Endothelial cell of umbilical vein (primary cell): ENCODE measurements at regions of chr6 and their contacts with region 1.

Region 1: DNA sequence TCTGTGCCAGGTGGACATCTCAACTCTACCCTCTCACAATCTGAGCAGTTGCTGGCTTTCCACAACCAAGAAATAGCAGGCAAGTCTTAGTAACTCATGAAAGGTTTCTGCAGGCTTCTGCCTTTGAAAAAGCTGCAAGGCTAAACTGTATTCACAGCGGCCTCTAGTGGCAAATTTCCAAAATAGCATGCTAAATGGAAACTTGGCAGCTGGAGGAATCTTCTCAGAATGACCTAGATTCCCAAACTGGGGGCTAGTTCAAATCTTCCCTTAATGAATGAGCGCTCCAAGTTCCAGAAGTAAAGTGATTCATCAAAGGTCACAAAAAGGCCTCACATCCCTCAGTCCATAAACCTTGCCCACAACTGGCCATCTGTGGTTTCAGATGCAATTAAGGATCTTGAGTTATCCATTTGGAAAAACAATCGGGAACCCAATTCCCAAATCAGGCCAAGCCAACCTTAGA is 11.9 kb upstream of the CPNE5 start:
- DNase-seq: peak; percentile 81
- H3K4me3 ChIP-seq: no peak overlapping the region
- H3K27ac ChIP-seq: no peak overlapping the region
- H3K4me1 ChIP-seq: peaks cover 30% of the 10 kb centered on the region
- H3K27me3 ChIP-seq: no peaks in the 10 kb centered on the region
- CTCF ChIP-seq: peak; percentile 70 to 85
- POLR2A ChIP-seq: no peak

Region 2: GRCh38 chr6:36623547-36624459 is 227.4 kb before region 1 on chr6:
- CTCF ChIA-PET with region 1: no interaction called
- POLR2A ChIA-PET with region 1: no interaction called
- dilution Hi-C with region 1: no loop called
- intact Hi-C with region 1: loop called (anchors 10 kb)
- DNase-seq: peak; percentile 84
- H3K4me3 ChIP-seq: no peak overlapping the region
- H3K27ac ChIP-seq: no peak overlapping the region
- H3K4me1 ChIP-seq: peaks cover 7% of the 10 kb centered on the region
- H3K27me3 ChIP-seq: no peaks in the 10 kb centered on the region
- CTCF ChIP-seq: peak; percentile 84 to 87
- POLR2A ChIP-seq: no peak

Region 3: GRCh38 chr6:36780442-36781177 is 70.6 kb before region 1 on chr6:
- CTCF ChIA-PET with region 1: interaction called, 552 read pairs
- POLR2A ChIA-PET with region 1: no interaction called
- dilution Hi-C with region 1: no loop called
- intact Hi-C with region 1: loop called (anchors 1 kb)
- DNase-seq: no peak
- H3K4me3 ChIP-seq: no peak overlapping the region
- H3K27ac ChIP-seq: no peak overlapping the region
- H3K4me1 ChIP-seq: no peaks in the 10 kb centered on the region
- H3K27me3 ChIP-seq: no peaks in the 10 kb centered on the region
- CTCF ChIP-seq: no peak
- POLR2A ChIP-seq: no peak

Region 4: DNA sequence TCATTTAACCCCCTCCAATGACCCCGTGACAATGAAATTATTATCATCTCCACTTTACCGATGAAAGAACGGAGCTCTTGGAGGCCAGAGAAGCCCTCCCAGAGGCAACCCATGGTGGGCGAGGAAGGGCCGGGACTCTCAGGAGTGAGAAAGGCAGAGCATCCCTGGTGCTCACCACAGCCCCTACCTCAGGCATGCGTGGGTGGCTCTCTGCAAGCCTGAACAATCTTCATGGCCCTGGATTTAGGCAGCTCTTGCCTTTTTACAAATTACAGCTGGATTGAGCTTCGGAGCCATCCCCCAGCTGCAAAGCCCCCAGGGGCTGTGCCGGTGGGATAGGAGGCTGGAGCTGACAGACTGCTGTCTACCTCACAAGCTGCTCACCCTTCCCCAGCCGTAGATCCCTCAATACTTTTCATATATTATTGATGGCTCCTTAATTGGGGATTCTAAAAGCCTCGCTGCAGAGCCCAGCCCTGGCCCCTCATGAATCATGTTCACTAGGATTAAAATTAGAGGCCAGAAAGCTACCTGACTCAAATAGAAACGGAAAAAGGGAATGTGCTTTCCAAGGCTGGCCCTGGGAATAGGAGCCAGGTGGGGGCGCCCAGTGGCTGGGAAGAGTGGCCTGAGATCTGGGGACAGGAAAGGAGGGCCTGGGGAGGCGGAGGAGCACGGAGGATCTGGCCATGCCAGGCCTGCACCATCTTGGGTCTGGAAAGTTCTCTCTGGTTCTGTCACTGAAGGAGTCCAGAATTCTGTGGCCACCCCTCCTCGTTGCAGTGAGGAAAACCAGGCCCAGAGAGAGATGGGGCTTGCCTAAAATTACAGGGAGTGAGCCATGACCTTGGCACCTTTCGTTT is 41.0 kb before region 1 on chr6:
- CTCF ChIA-PET with region 1: interaction called, 95 read pairs
- POLR2A ChIA-PET with region 1: no interaction called
- dilution Hi-C with region 1: loop called (anchors 5 kb)
- intact Hi-C with region 1: loop called (anchors 1 kb)
- DNase-seq: no peak
- H3K4me3 ChIP-seq: no peak overlapping the region
- H3K27ac ChIP-seq: no peak overlapping the region
- H3K4me1 ChIP-seq: peaks cover 4% of the 10 kb centered on the region
- H3K27me3 ChIP-seq: no peaks in the 10 kb centered on the region
- CTCF ChIP-seq: peak in 1 of 2 donors; percentile 26
- POLR2A ChIP-seq: no peak

Region 5: GRCh38 chr6:36839749-36840431 is 11.3 kb before region 1 on chr6:
- CTCF ChIA-PET with region 1: interaction called, 24 read pairs
- POLR2A ChIA-PET with region 1: no interaction called
- dilution Hi-C with region 1: no loop called
- intact Hi-C with region 1: no loop called
- DNase-seq: no peak
- H3K4me3 ChIP-seq: peak overlapping the region; percentile 37 to 85 (median 62)
- H3K27ac ChIP-seq: no peak overlapping the region
- H3K4me1 ChIP-seq: peaks cover 21% of the 10 kb centered on the region
- H3K27me3 ChIP-seq: no peaks in the 10 kb centered on the region
- CTCF ChIP-seq: peak; percentile 12 to 27
- POLR2A ChIP-seq: no peak

Region 6: GRCh38 chr6:36912586-36912985 is 61.4 kb after region 1 on chr6:
- CTCF ChIA-PET with region 1: interaction called, 18 read pairs
- POLR2A ChIA-PET with region 1: no interaction called
- dilution Hi-C with region 1: no loop called
- intact Hi-C with region 1: no loop called
- DNase-seq: no peak
- H3K4me3 ChIP-seq: no peak overlapping the region
- H3K27ac ChIP-seq: no peak overlapping the region
- H3K4me1 ChIP-seq: peaks cover 8% of the 10 kb centered on the region
- H3K27me3 ChIP-seq: no peaks in the 10 kb centered on the region
- CTCF ChIP-seq: no peak
- POLR2A ChIP-seq: no peak

Region 7: DNA sequence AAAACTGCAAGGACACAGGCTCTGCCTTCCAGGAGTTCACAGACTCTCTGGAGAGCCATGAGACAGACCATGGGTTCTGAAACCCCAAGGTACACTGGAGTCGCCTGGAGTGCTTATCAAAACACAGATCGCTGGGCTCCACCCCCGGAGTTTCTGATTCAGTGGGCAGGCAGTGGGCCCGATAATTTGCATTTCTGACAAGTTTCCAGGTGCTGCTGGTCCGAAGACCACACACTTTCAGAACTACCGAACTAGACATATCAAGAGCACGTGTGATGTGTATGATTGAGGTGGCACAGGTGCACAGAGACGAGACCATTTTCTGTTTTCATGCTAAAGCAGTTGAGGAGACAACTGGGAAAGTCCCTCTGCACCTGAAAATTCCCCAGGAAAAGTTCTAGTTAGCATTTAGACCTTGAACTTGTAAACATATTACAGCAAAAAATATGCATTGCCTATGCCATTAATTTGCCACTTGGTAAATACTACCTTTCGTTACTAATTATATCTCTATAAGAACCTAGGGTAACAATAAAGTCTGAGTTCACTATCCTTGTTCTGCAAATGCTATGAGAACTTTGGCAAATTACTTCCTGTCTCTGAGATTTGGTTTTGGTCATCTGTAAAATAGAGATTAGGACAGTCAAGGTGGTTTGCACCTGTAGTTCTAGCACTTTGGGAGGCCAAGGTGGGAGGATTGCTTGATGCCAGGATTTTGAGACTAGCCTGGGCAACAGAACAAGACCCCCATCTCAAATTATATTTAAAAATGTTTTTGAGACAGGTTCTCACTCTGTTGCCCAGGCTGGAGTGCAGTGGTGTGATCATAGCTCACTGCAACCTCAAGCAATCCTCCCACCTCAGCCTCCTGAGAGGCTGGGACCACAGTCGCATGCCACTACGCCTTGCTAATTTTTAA is 304.5 kb after region 1 on chr6:
- CTCF ChIA-PET with region 1: no interaction called
- POLR2A ChIA-PET with region 1: no interaction called
- dilution Hi-C with region 1: no loop called
- intact Hi-C with region 1: no loop called
- DNase-seq: no peak
- H3K4me3 ChIP-seq: no peak overlapping the region
- H3K27ac ChIP-seq: no peak overlapping the region
- H3K4me1 ChIP-seq: peaks cover 3% of the 10 kb centered on the region
- H3K27me3 ChIP-seq: peaks cover 2 to 7% of the 10 kb centered on the region in 2 experiments
- CTCF ChIP-seq: no peak
- POLR2A ChIP-seq: no peak